ENCODE measurements at regions of chr1 and their contacts with region 1.

Region 1: GRCh38 chr1:34865981-34866761 is 6.6 kb upstream of the SMIM12 start:
- DNase-seq: peak; percentile 89
- CTCF ChIP-seq: peak; percentile 93

Region 2: DNA sequence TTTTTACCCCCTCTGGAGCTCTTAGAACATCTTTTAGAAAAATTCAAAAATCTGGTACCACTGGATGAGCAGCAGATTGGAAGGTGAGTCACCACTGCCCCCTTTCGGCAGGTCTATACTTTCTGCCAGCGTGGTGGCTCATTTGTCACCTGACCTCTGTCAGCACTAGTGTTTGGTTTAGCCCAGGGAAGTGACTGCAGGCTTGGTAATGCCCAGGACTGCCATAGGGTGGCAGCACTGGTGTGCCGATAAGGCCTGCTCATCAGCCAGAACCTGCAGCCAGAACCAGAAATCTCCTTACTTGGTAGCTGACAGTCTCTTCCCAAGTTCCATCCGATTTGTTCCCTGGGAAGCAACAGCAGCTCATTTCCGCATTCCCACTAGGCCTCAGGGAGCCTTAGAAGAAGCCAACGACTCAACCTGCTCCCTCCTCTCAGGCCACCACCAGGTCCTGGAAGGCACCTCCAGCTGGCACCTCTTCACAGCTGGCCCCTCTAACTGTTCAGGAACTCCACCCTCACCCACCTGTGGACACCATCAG is 13.4 kb before region 1 on chr1:
- CTCF ChIA-PET with region 1: interaction called, 73 read pairs
- POLR2A ChIA-PET with region 1: no interaction called
- DNase-seq: peak; percentile 90
- CTCF ChIP-seq: peak; percentile 92

Region 3: GRCh38 chr1:34885405-34886247 is 19.5 kb after region 1 on chr1:
- CTCF ChIA-PET with region 1: interaction called, 23 read pairs
- POLR2A ChIA-PET with region 1: no interaction called
- DNase-seq: peak; percentile 56
- CTCF ChIP-seq: no peak

Measured in GM10248 (cell line).